Activated T-helper 2 cell treated with anti-CD3 and anti-CD28 coated beads, Interferon-gamma antibody, Interleukin-2, Interleukin-4, amounts not matched to agents 10 μg/mL and 5 μg/mL and 100 μg/mL, durations not matched to agents 14 hours and 24 hours and 36 hours (primary cell): ENCODE measurements at regions of chr9 and their contacts with region 1.

Region 1: GRCh38 chr9:4382722-4383317 is 83.0 kb upstream of the GLIS3 start:
- DNase-seq: no peak
- H3K4me3 Mint-ChIP-seq: no peak overlapping the region
- H3K27ac Mint-ChIP-seq: no peak overlapping the region
- H3K4me1 Mint-ChIP-seq: no peaks in the 10 kb centered on the region
- H3K27me3 Mint-ChIP-seq: peaks cover 12% of the 10 kb centered on the region

Region 2: GRCh38 chr9:4475301-4475700 is 92.5 kb after region 1 on chr9:
- intact Hi-C with region 1: no loop called
- DNase-seq: no peak
- H3K4me3 Mint-ChIP-seq: no peak overlapping the region
- H3K27ac Mint-ChIP-seq: no peak overlapping the region
- H3K4me1 Mint-ChIP-seq: no peaks in the 10 kb centered on the region
- H3K27me3 Mint-ChIP-seq: peaks cover 4% of the 10 kb centered on the region

Region 3: DNA sequence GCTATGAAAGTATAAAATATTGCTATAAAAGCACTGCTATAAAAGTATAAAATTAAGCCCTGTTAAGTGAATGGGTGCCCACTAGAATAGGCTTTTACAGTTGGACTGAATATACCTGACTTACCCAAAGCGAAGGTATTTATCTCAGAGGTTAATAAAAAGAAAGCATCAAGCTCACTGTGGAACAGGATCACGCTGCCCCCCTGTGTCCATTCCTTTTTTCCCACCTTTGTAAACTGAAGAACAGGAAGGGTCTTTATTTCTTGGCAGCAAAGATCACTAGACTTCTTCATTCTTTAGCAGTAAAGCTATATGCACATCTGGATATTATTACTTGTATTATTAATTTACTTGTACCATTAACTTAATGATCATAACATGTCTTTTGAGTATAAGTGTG is 257.2 kb after region 1 on chr9:
- intact Hi-C with region 1: loop called (anchors 2 kb)
- DNase-seq: no peak
- H3K4me3 Mint-ChIP-seq: no peak overlapping the region
- H3K27ac Mint-ChIP-seq: no peak overlapping the region
- H3K4me1 Mint-ChIP-seq: no peaks in the 10 kb centered on the region
- H3K27me3 Mint-ChIP-seq: peaks cover 9% of the 10 kb centered on the region